ENCODE measurements at regions of chr15 and their contacts with region 1.

Region 1: GRCh38 chr15:80173022-80173759 is 20.4 kb downstream of the FAH start:
- DNase-seq: peak; percentile 44 to 71 (median 64)
- ATAC-seq: peak; percentile 84
- H3K4me3 ChIP-seq: no peak overlapping the region
- H3K4me3 Mint-ChIP-seq: peak overlapping the region in 1 of 10 donors; percentile 5
- H3K27ac ChIP-seq: no peak overlapping the region
- H3K27ac Mint-ChIP-seq: peak overlapping the region in 2 of 9 donors; percentile 5 to 55
- H3K4me1 ChIP-seq: no peaks in the 10 kb centered on the region
- H3K4me1 Mint-ChIP-seq: peaks cover 0 to 2% (median 0%) of the 10 kb centered on the region in 7 donors
- H3K27me3 ChIP-seq: no peaks in the 10 kb centered on the region
- H3K27me3 Mint-ChIP-seq: no peaks in the 10 kb centered on the region

Region 2: DNA sequence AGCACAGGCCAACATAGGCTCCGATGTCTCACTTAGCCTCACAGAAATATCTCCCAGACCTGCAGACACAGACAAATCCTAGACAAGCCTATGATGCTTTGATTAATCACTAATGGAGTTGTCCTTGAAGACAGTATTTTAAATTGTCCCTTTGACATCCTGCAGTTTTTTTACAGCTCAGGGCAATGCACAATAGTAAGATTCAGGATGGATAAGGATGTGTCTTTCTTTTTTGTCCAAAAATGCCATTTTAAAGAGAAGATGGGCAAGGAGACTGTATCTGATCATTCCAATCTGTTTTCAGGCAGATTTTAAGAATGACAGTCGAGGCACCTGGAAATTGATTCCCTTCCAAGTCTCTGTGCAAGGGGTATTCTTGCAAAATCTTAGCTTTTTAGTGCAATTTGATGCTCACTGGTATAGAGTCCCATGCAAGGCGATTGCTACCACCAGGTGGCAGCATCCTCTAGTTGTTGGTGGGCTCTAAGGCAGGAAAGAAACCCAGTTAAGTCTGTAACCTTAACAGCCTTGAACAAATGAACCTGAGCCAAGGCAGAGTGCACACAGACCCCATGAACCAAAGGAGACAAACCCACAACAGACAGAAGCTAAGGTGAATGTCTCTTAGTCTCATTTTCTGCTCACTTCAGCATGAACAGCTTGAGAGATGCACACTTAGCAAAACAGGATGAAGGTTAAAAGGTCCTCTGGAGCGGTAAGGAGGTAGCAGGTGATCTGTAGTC is 792.3 kb before region 1 on chr15:
- CTCF ChIA-PET with region 1: interaction called, 34 read pairs
- POLR2A ChIA-PET with region 1: no interaction called
- intact Hi-C with region 1: loop called in 1 of 2 experiments (anchors 2 kb)
- DNase-seq: peak; percentile 26 to 77 (median 62)
- ATAC-seq: peak; percentile 92
- H3K4me3 ChIP-seq: no peak overlapping the region
- H3K4me3 Mint-ChIP-seq: peak overlapping the region in 1 of 10 donors; percentile 36
- H3K27ac ChIP-seq: no peak overlapping the region
- H3K27ac Mint-ChIP-seq: peak overlapping the region in 2 of 9 donors; percentile 65 to 70
- H3K4me1 ChIP-seq: no peaks in the 10 kb centered on the region
- H3K4me1 Mint-ChIP-seq: peaks cover 0 to 5% (median 0%) of the 10 kb centered on the region in 7 donors
- H3K27me3 ChIP-seq: no peaks in the 10 kb centered on the region
- H3K27me3 Mint-ChIP-seq: no peaks in the 10 kb centered on the region

Region 3: GRCh38 chr15:79853458-79854328 is 319.5 kb before region 1 on chr15:
- CTCF ChIA-PET with region 1: interaction called, 9 read pairs
- POLR2A ChIA-PET with region 1: no interaction called
- intact Hi-C with region 1: loop called (anchors 2 to 5 kb)
- DNase-seq: peak in 8 of 9 donors; percentile 15 to 61 (median 49)
- ATAC-seq: peak; percentile 97
- H3K4me3 ChIP-seq: no peak overlapping the region
- H3K4me3 Mint-ChIP-seq: no peak overlapping the region
- H3K27ac ChIP-seq: no peak overlapping the region
- H3K27ac Mint-ChIP-seq: peak overlapping the region in 4 of 9 donors; percentile 0 to 47 (median 30)
- H3K4me1 ChIP-seq: no peaks in the 10 kb centered on the region
- H3K4me1 Mint-ChIP-seq: peaks cover 6 to 43% (median 32%) of the 10 kb centered on the region in 7 donors
- H3K27me3 ChIP-seq: no peaks in the 10 kb centered on the region
- H3K27me3 Mint-ChIP-seq: no peaks in the 10 kb centered on the region

Region 4: DNA sequence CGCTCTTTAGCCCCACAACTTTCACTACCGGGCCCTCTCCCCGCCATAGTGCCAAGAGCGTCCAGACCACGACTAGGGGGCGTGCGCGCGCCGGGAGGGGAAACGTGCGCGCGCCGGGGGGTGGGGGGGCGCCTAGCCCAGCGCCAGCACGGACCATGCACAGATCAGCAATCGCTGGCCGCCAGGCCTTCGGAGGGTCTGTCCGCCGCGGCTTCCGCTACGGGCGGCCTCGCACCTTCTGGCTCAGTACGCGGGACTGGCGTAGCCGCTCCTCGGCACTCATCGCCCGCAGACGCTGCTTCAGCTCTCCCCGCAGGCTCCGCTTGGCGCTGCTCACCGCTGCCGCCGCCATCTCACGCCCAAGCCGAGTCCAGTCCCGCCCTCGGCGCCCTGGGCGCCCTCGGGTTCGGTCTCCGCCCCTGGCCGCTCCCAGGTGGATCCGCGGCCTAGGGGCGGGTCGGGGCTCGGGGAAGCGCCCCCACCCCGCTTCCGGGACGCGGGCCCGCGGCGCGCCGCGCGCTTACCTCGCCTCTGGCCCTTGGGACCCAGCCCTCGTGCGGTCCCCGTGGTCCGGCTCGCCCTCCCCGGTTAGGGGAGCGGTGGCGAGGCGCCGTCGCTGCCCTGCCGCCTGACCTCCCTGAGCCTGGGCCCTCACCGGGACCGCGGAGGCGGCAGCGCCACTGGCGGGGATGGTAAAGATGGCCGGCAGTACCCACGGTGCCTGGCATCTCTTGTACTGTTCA is 276.4 kb before region 1 on chr15 and contains the start of gene MTHFS:
- CTCF ChIA-PET with region 1: interaction called, 3 read pairs
- POLR2A ChIA-PET with region 1: no interaction called
- intact Hi-C with region 1: loop called in 1 of 2 experiments (anchors 1 kb)
- DNase-seq: peak; percentile 73 to 87 (median 83)
- ATAC-seq: peak; percentile 92
- H3K4me3 ChIP-seq: peak within 1 kb of the TSS; percentile 71
- H3K4me3 Mint-ChIP-seq: peak within 1 kb of the TSS; percentile 91 to 100 (median 99)
- H3K27ac ChIP-seq: peak within 1 kb of the TSS; percentile 92
- H3K27ac Mint-ChIP-seq: peak within 1 kb of the TSS; percentile 97 to 100 (median 100)
- H3K4me1 ChIP-seq: peaks cover 20 to 23% of the 10 kb centered on the region in 2 donors
- H3K4me1 Mint-ChIP-seq: peaks cover 28 to 49% (median 46%) of the 10 kb centered on the region in 7 donors
- H3K27me3 ChIP-seq: no peaks in the 10 kb centered on the region
- H3K27me3 Mint-ChIP-seq: no peaks in the 10 kb centered on the region
- total RNA-seq, gene MTHFS: 15.8 to 31.8 (median 20.3) TPM

Region 5: GRCh38 chr15:80105595-80106450 is 67.4 kb before region 1 on chr15:
- CTCF ChIA-PET with region 1: no interaction called
- POLR2A ChIA-PET with region 1: no interaction called
- intact Hi-C with region 1: no loop called
- DNase-seq: no peak
- ATAC-seq: no peak
- H3K4me3 ChIP-seq: no peak overlapping the region
- H3K4me3 Mint-ChIP-seq: no peak overlapping the region
- H3K27ac ChIP-seq: no peak overlapping the region
- H3K27ac Mint-ChIP-seq: peak overlapping the region in 1 of 9 donors; percentile 36
- H3K4me1 ChIP-seq: peaks cover 0 to 8% of the 10 kb centered on the region in 2 donors
- H3K4me1 Mint-ChIP-seq: peaks cover 6 to 74% (median 50%) of the 10 kb centered on the region in 7 donors
- H3K27me3 ChIP-seq: no peaks in the 10 kb centered on the region
- H3K27me3 Mint-ChIP-seq: no peaks in the 10 kb centered on the region